ENCODE measurements at regions of chr11 and their contacts with region 1.

Region 1: DNA sequence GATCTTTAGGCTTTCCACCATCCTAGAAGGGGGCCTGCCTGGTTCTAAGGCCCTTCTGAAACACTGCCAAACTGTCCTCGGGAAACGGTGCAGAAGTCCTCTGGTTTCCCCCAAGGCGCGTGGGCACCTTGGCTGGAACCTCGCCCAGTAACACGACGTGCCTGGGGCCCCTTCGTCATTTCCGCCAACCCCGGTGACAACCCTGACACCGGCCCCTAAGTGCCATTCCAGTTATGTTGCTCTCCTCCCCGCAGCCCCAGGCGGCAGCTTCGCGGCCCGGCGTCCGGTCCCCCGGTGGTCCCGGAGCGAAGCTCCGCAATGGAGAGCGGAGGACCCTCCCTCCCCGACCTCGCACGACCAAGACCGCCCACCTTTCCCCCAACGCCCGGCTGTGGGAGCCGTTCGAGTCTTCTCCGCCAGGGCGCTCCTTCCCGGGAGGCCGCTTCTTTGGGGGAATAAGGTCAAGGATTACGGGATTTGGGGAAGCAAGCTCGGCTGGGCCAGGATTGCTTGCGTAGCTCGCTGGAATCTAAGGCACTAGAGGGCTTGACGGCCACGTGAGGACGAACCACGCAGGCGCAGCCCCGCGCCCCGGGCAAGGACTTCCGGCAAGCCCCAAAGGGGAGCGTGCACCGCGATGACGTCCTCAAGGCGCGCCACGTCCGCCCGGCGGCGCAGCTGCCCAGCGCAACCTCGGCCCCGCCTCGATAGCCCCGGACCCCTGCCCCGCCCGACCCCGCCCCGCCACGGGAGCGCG is 626 bp downstream of the RNH1 start:
- DNase-seq: peak; percentile 97
- ATAC-seq: peak; percentile 70
- H3K4me3 ChIP-seq: peak overlapping the region; percentile 38 to 100 (median 98)
- H3K4me3 Mint-ChIP-seq: peak overlapping the region; percentile 99
- H3K27ac ChIP-seq: peak overlapping the region; percentile 100
- H3K27ac Mint-ChIP-seq: peak overlapping the region; percentile 100
- H3K4me1 ChIP-seq: peaks cover 28 to 45% of the 10 kb centered on the region in 2 donors
- H3K4me1 Mint-ChIP-seq: peaks cover 38% of the 10 kb centered on the region
- H3K27me3 ChIP-seq: peaks cover 0 to 10% (median 0%) of the 10 kb centered on the region in 4 experiments
- H3K27me3 Mint-ChIP-seq: no peaks in the 10 kb centered on the region
- CTCF ChIP-seq: no peak

Region 2: GRCh38 chr11:207208-207862 is 299.1 kb before region 1 on chr11 and contains the starts of genes BET1L and RIC8A:
- CTCF ChIA-PET with region 1: no interaction called
- POLR2A ChIA-PET with region 1: no interaction called
- intact Hi-C with region 1: loop called (anchors 1 kb)
- DNase-seq: peak; percentile 99
- ATAC-seq: peak; percentile 79
- H3K4me3 ChIP-seq: peak within 1 kb of the TSS; percentile 87 to 98 (median 91)
- H3K4me3 Mint-ChIP-seq: peak within 1 kb of the TSS; percentile 98
- H3K27ac ChIP-seq: peak within 1 kb of the TSS; percentile 96 to 98
- H3K27ac Mint-ChIP-seq: peak within 1 kb of the TSS; percentile 100
- H3K4me1 ChIP-seq: peaks cover 26 to 43% of the 10 kb centered on the region in 2 donors
- H3K4me1 Mint-ChIP-seq: peaks cover 53% of the 10 kb centered on the region
- H3K27me3 ChIP-seq: no peaks in the 10 kb centered on the region
- H3K27me3 Mint-ChIP-seq: no peaks in the 10 kb centered on the region
- CTCF ChIP-seq: no peak
- total RNA-seq, gene BET1L: 69.1 and 72.2 TPM in 2 replicates
- total RNA-seq, gene RIC8A: 102 and 110 TPM in 2 replicates

Region 3: GRCh38 chr11:279966-280582 is 226.3 kb before region 1 on chr11:
- CTCF ChIA-PET with region 1: no interaction called
- POLR2A ChIA-PET with region 1: no interaction called
- intact Hi-C with region 1: no loop called
- DNase-seq: peak; percentile 81
- ATAC-seq: peak; percentile 69
- H3K4me3 ChIP-seq: peak overlapping the region in 4 of 5 experiments; percentile 29 to 57 (median 45)
- H3K4me3 Mint-ChIP-seq: peak overlapping the region; percentile 85
- H3K27ac ChIP-seq: no peak overlapping the region
- H3K27ac Mint-ChIP-seq: peak overlapping the region; percentile 81
- H3K4me1 ChIP-seq: peaks cover 36 to 39% of the 10 kb centered on the region in 2 donors
- H3K4me1 Mint-ChIP-seq: peaks cover 39% of the 10 kb centered on the region
- H3K27me3 ChIP-seq: peaks cover 0 to 45% (median 20%) of the 10 kb centered on the region in 4 experiments
- H3K27me3 Mint-ChIP-seq: peaks cover 28% of the 10 kb centered on the region
- CTCF ChIP-seq: no peak

Region 4: GRCh38 chr11:518463-519250 is 12.2 kb after region 1 on chr11:
- CTCF ChIA-PET with region 1: interaction called, 6 read pairs
- POLR2A ChIA-PET with region 1: interaction called, 6 read pairs
- intact Hi-C with region 1: loop called (anchors 1 kb)
- DNase-seq: peak; percentile 96
- ATAC-seq: peak; percentile 97
- H3K4me3 ChIP-seq: peak overlapping the region in 4 of 5 experiments; percentile 21 to 44 (median 40)
- H3K4me3 Mint-ChIP-seq: peak overlapping the region; percentile 86
- H3K27ac ChIP-seq: peak overlapping the region in 1 of 2 donors; percentile 36
- H3K27ac Mint-ChIP-seq: peak overlapping the region; percentile 83
- H3K4me1 ChIP-seq: peaks cover 3 to 4% of the 10 kb centered on the region in 2 donors
- H3K4me1 Mint-ChIP-seq: peaks cover 9% of the 10 kb centered on the region
- H3K27me3 ChIP-seq: no peaks in the 10 kb centered on the region
- H3K27me3 Mint-ChIP-seq: no peaks in the 10 kb centered on the region
- CTCF ChIP-seq: peak; percentile 100

Region 5: DNA sequence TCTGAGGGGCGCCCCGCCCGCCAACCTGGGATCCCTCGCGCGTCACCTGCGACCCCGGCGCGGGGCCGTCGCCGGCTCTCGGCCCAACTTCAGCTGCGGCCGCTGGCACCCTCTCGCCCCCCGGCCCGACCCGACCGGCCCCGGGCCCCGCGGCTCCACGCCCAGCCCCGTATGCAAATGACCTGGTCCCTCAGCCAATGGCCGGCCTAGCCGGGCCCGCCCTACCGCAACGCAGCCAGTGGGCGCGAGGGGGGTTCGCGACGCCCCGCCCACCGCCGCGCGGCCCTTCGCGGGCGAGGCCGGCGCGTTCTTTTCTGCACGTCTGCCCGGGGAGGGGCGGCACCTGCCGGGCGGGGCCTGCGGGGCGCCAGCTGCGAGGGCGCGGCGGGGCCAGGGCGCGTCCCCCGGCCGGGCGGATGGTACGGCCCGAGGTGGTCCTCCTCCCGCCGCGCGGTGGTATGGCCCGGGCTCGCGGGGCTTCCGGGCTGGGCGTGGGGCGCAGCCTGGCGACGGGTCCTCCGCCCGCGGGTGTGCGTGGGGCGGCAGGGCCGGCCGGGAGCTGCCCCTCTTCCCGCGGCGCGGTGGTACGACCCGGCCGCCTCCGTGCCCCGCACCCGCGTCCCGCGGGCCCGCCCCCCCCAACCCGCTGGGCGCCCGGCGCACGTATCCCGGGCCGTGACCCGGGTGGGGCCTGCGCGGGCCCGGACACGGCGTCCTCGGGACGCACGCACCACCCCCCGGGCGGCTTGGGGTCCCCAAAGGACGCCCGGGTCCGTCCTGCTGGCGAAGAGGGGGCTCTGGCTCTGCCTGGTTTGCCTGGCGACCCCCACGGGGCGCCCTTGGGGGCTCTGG is 62.1 kb after region 1 on chr11:
- CTCF ChIA-PET with region 1: no interaction called
- POLR2A ChIA-PET with region 1: no interaction called
- intact Hi-C with region 1: loop called (anchors 2 kb)
- DNase-seq: peak; percentile 96
- ATAC-seq: peak; percentile 91
- H3K4me3 ChIP-seq: peak overlapping the region; percentile 30 to 85 (median 68)
- H3K4me3 Mint-ChIP-seq: peak overlapping the region; percentile 83
- H3K27ac ChIP-seq: peak overlapping the region; percentile 50 to 67
- H3K27ac Mint-ChIP-seq: peak overlapping the region; percentile 37
- H3K4me1 ChIP-seq: peaks cover 10 to 13% of the 10 kb centered on the region in 2 donors
- H3K4me1 Mint-ChIP-seq: peaks cover 9% of the 10 kb centered on the region
- H3K27me3 ChIP-seq: peaks cover 0 to 6% (median 2%) of the 10 kb centered on the region in 4 experiments
- H3K27me3 Mint-ChIP-seq: no peaks in the 10 kb centered on the region
- CTCF ChIP-seq: no peak

Region 6: DNA sequence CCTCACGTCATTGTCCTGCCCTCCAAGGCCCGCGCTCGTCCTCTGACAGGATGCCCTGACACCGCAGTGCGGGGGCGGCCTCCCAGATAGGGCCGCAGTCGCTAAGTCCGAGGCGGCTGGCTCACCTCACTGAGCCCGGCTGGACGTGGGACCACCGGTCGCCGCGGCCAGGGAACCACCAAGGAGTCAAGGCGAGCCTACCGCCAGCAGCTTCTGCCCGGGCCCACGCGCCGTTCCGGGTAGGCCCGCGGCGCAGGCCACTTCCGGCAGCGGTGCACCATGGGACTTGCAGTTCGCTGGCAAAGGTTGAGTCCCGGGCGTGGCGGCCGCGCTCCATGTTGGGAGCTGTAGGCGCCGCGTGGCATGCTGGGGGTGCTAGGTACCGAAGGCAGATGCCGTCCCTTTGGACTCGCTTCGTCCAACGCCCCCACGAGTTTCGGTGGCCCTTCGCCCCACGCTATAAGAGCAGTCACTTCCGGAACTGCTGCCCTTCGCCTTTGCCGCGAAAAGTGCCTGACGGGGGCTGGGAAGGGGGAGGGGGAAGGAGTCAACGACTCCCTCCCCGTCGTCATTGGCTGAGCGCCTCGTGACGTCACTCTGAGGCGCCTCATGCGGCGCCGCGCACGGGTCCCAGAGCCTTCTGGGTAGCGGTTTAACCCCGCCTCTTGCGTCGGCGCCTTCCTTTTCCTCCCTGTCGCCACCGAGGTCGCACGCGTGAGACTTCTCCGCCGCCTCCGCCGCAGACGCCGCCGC is 303.0 kb after region 1 on chr11 and contains the start of gene RPLP2:
- CTCF ChIA-PET with region 1: no interaction called
- POLR2A ChIA-PET with region 1: no interaction called
- intact Hi-C with region 1: loop called (anchors 2 kb)
- DNase-seq: peak; percentile 100
- ATAC-seq: peak; percentile 82
- H3K4me3 ChIP-seq: peak within 1 kb of the TSS; percentile 53 to 95 (median 86)
- H3K4me3 Mint-ChIP-seq: peak within 1 kb of the TSS; percentile 96
- H3K27ac ChIP-seq: peak within 1 kb of the TSS; percentile 83 to 94
- H3K27ac Mint-ChIP-seq: peak within 1 kb of the TSS; percentile 99
- H3K4me1 ChIP-seq: peaks cover 23 to 35% of the 10 kb centered on the region in 2 donors
- H3K4me1 Mint-ChIP-seq: peaks cover 42% of the 10 kb centered on the region
- H3K27me3 ChIP-seq: no peaks in the 10 kb centered on the region
- H3K27me3 Mint-ChIP-seq: no peaks in the 10 kb centered on the region
- CTCF ChIP-seq: no peak
- total RNA-seq, gene RPLP2: 3,814 and 3,947 TPM in 2 replicates

Measured in B cell (primary cell).